ENCODE measurements at regions of chr9 and their contacts with region 1.

Region 1: GRCh38 chr9:99954819-99955218 is 48.4 kb downstream of the STX17 start:
- DNase-seq: no peak
- ATAC-seq: no peak

Region 2: GRCh38 chr9:98568909-98569469 is 1385.8 kb before region 1 on chr9:
- intact Hi-C with region 1: loop called in 1 of 2 experiments (anchors 10 kb)
- DNase-seq: no peak
- ATAC-seq: no peak

Region 3: GRCh38 chr9:98944057-98944733 is 1010.6 kb before region 1 on chr9:
- intact Hi-C with region 1: no loop called
- DNase-seq: peak; percentile 23 to 38
- ATAC-seq: no peak